Aorta (tissue), 5 donors: ENCODE measurements at regions of chr9 and their contacts with region 1.

Region 1: GRCh38 chr9:121545875-121546423 is 46.3 kb upstream of the GGTA1 start:
- DNase-seq: peak; percentile 98 to 99
- ATAC-seq: peak; percentile 96
- H3K4me3 ChIP-seq: no peak overlapping the region
- H3K27ac ChIP-seq: no peak overlapping the region
- H3K4me1 ChIP-seq: no peaks in the 10 kb centered on the region
- H3K27me3 ChIP-seq: no peaks in the 10 kb centered on the region

Region 2: DNA sequence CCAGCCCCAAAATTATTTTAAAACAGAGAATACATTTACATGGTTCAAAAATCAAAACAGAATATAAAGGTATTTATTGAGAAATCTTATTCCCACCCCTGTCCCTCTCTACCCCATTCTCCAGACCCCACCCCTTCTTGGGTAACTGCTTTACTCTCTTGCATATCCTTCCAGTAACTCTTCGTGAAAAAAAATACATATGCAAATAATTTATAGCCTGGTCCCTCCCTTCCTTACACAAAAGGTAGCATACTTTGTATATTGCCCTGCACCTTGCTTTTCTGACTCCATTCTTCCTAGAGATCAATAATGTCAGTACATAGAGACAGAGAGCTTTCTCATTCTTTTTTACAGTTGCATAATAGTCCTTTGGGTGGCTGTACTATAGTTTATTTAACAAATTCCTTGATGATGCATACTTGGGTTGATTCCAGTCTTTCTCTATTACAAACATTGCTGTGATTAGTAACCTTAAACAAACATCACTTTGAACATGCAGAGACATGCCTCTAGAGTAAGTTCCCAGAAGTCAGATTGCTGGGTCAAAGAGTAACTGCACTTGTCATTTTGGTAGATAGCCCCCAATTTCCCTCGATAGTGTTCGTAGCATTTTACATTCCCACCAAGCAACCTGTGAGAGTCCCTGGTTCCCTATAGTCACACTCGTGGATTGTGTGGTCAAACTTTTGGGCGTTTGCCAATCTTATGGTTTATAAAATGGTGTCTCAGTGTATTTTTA is 223.7 kb before region 1 on chr9:
- intact Hi-C with region 1: no loop called
- DNase-seq: no peak
- ATAC-seq: no peak
- H3K4me3 ChIP-seq: no peak overlapping the region
- H3K27ac ChIP-seq: peak overlapping the region; percentile 47 to 92
- H3K4me1 ChIP-seq: no peaks in the 10 kb centered on the region
- H3K27me3 ChIP-seq: no peaks in the 10 kb centered on the region

Region 3: DNA sequence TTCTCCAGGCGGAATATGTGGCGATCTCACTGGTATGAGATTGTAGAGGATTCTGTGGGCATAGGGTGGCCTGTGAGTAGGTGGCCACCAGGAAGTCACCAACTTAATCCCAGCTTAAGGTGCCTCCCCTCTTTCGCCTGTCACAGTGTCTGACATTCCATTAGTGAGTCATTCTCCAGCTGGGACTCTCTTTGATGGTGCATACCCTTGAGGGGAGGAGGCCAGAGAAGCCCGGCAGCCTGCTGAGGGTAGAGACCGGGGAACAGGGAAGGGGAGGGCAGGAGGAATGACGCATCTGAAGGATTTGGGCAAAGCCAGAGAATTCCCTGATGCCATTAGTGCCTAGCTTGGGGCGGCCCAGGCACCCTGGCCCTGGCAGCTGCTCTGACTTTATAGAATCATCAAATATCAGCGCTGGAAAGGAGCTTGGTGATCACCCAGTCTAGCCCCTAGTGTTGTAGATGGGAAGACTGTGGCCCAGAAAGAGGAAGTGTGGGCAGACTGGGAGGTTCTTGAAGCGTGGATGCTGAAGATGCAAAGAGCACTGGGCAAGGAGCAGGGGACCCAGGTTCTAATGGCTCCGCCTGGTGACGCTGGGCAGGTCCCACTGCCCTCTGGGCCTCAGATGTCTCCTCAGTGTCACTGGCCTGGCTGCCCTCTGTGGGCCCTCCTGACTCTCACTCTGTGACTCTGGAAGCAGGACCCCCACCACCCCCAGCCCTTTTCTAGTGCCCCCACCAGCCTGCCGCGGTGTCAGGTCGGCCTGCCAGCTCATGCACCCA is 146.8 kb after region 1 on chr9:
- intact Hi-C with region 1: loop called (anchors 2 to 5 kb)
- DNase-seq: peak; percentile 75 to 85
- ATAC-seq: peak; percentile 73
- H3K4me3 ChIP-seq: no peak overlapping the region
- H3K27ac ChIP-seq: peak overlapping the region in 1 of 2 donors; percentile 84
- H3K4me1 ChIP-seq: no peaks in the 10 kb centered on the region
- H3K27me3 ChIP-seq: no peaks in the 10 kb centered on the region

Region 4: DNA sequence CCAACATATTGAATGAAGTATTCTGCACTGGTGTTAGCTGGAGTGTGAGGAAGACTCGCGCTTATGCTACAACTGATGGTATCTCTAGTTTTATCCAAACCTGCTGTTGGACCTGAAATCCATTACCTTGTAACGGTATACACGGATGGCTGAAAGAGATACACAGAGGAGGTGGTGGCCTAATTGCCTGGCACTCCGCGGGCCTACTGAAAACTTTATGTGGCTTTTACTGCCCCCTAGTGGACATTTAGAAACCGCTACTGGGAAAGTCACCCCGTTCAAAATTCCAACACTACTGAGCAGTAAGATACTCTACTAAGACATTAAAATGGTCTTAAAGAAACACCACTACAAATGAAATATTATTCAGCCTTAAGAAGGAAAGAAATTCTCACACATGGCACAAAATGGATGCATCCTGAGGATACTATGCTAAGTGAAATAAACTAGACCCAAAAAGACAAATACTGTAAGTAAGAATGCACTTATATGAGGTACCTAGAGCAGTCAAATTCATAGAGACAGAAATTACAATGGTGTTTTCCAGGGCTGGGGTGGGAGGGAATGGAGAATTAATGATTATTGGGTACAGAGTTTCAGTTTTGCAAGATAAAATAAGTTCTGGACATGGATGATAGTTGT is 446.7 kb after region 1 on chr9:
- intact Hi-C with region 1: loop called (anchors 2 kb)
- DNase-seq: peak in 1 of 2 donors; percentile 55
- ATAC-seq: peak; percentile 71
- H3K4me3 ChIP-seq: no peak overlapping the region
- H3K27ac ChIP-seq: no peak overlapping the region
- H3K4me1 ChIP-seq: no peaks in the 10 kb centered on the region
- H3K27me3 ChIP-seq: no peaks in the 10 kb centered on the region